ENCODE measurements at regions of chr5 and their contacts with region 1.

Region 1: DNA sequence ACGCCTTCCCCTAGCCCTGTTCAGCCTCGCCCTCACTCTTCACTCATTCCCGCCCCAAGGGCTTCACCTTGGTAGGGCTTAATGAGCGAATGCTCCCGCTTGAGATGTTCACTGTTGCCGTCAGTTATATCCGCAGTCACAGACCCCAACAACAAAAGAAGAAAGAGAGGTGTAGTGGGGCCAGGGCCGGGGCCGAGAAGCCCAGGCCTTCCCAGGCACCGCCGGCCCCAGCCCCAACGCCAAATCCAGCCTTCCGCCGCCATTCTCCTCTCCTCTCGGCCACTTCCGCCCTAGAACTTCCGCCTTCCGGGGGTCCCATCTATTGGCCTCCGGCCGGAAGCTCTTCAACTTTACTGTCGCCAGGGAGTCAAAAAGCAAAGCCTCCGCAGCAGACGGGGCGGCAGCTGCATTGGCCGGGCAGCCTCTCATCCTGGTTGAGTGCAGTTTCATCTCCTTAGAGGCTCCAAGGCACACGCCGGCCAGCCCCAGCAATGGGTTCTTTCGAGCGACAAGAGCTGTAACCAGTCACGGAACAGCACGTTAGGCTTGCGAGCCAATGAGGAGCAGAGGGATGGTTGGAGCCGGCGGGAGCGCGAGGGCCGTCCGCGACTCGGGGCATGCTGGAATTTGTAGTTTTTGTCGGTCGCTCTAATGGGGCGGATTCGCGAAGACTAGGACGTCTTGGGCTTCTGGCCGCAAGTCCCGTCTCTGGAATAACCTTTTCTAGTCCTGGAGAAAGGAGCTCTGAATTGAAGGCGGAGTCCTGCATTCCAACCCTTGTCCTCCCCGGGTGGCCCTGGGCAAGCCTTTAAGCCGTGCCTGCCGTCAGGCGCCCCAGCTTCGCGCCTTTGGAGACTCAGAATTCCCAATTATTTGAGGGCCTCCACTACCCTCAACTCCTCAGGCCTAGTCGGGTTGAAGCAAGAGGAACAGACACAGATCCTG is at the start of gene LMAN2:
- DNase-seq: peak; percentile 95
- ATAC-seq: peak; percentile 99
- H3K4me3 Mint-ChIP-seq: peak within 1 kb of the TSS; percentile 89
- H3K27ac Mint-ChIP-seq: peak within 1 kb of the TSS; percentile 99
- H3K4me1 Mint-ChIP-seq: peaks cover 48% of the 10 kb centered on the region
- H3K27me3 Mint-ChIP-seq: no peaks in the 10 kb centered on the region
- total RNA-seq, gene LMAN2: 74.5 to 92.1 TPM

Region 2: DNA sequence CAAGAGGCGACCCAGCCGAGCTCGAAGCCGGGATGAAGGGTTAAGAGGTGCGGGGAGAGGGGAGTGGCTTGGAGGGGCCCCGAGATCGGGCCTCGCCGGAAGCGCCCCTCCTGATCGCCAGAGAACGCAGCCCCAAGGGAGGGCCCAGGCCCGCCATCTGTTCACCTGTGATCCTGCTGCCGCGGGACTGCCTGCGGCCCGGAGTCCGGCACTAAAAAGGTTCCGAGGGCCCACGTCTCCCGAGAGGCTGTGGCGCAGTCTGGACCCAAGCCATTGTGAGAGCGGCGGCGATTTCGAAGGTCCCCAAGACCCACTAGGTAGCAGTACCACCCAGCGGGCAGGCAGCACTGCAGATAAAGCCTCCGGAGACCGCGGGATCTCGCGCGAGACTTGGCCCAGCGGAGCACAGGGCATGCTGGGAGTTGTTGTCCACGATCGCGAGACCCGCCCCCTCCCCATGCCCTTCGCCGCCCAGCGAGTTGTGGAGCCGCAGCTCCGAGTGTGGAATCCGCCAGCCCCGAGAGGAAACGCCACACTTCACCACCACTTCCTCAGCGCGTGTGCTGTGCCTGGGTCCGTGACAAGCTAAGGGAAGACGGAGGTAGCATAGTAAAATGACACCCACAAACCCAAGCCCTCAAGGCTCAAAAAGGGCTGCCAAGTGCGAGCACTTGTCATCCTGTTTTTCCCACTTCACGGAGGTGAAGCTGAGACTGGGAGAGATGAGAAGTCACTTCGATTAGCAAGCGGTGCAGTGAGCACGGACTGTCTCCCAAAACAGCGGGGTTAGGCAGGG is 990.0 kb before region 1 on chr5 and contains the start of gene KIAA1191:
- CTCF ChIA-PET with region 1: no interaction called
- POLR2A ChIA-PET with region 1: no interaction called
- intact Hi-C with region 1: loop called in 1 of 2 experiments (anchors 10 kb)
- DNase-seq: peak; percentile 97
- ATAC-seq: peak; percentile 91
- H3K4me3 Mint-ChIP-seq: peak within 1 kb of the TSS; percentile 95
- H3K27ac Mint-ChIP-seq: peak within 1 kb of the TSS; percentile 94
- H3K4me1 Mint-ChIP-seq: peaks cover 32% of the 10 kb centered on the region
- H3K27me3 Mint-ChIP-seq: no peaks in the 10 kb centered on the region
- total RNA-seq, gene KIAA1191: 42.2 to 52.6 TPM

Region 3: GRCh38 chr5:177303121-177303924 is 48.3 kb before region 1 on chr5 and contains the starts of genes PRELID1 and RAB24:
- CTCF ChIA-PET with region 1: interaction called, 16 read pairs
- POLR2A ChIA-PET with region 1: no interaction called
- intact Hi-C with region 1: loop called in 1 of 2 experiments (anchors 1 kb)
- DNase-seq: peak; percentile 95
- ATAC-seq: peak; percentile 69
- H3K4me3 Mint-ChIP-seq: peak within 1 kb of the TSS; percentile 93
- H3K27ac Mint-ChIP-seq: peak within 1 kb of the TSS; percentile 90
- H3K4me1 Mint-ChIP-seq: peaks cover 59% of the 10 kb centered on the region
- H3K27me3 Mint-ChIP-seq: no peaks in the 10 kb centered on the region
- total RNA-seq, gene PRELID1: 266 to 362 TPM
- total RNA-seq, gene RAB24: 10.9 to 21.0 TPM

Region 4: DNA sequence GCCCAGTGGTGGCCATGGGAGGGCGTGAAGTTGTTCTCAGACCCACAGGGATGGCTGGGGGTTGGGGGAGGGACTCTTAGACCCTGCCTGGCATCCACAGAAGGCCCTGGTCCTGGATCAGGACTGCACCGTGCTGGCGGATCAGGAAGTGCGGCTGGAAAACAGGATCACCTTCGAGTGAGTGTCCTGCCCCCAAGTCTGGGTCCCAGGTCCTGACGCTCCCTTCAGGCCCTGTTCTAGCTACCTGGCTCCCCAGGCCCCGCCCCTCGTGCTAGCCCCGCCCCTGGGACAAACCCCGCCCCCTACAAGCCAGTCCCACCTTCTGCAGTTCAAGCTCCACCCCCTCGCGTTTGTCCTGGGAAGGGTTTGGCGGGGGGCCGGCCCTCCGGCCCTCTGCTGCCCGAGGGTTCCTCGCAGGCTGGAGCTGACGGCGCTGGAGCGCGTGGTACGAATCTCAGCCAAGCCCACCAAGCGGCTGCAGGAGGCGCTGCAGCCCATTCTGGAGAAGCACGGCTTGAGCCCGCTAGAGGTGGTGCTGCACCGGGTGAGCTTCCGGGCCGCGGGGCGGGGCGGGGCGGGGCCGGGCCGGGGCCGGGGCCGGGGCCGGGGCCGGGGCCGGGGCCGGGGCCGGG is 18.9 kb after region 1 on chr5:
- CTCF ChIA-PET with region 1: interaction called, 21 read pairs
- POLR2A ChIA-PET with region 1: no interaction called
- intact Hi-C with region 1: no loop called
- DNase-seq: peak; percentile 76
- ATAC-seq: peak; percentile 66
- H3K4me3 Mint-ChIP-seq: peak overlapping the region; percentile 53
- H3K27ac Mint-ChIP-seq: no peak overlapping the region
- H3K4me1 Mint-ChIP-seq: peaks cover 70% of the 10 kb centered on the region
- H3K27me3 Mint-ChIP-seq: no peaks in the 10 kb centered on the region

Region 5: DNA sequence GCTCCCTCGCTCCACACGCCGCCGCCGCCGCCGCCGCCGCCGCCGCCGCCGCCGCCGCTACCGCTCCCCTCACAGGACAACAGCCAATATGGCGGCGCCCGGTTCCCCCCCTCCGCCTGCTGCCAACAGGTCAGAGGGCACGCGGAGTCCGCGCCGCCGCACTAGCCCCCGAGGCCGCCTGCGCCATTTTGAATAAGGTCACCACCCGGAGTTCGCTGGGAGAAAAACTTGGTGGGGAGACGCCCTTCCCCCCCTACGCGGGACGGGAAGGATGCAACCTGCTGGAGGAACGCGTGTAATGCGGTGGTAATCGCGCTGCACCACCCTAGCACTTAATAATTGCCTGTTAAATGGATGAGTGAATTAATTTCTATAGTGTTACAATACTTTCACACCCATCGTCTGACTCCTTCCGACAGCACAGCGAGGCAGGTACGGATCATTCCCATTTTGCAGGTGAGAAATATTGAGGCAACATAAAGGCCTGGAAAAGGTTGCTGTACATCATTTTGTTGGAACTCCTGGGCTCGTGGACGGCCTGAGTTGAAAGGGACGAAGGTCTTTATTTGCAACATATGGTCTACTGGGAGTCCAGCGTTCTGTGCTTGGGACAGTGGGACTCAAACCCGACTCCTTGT is 202.9 kb after region 1 on chr5 and contains the start of gene FAM193B:
- CTCF ChIA-PET with region 1: no interaction called
- POLR2A ChIA-PET with region 1: no interaction called
- intact Hi-C with region 1: loop called in 1 of 2 experiments (anchors 2 kb)
- DNase-seq: peak; percentile 98
- ATAC-seq: peak; percentile 99
- H3K4me3 Mint-ChIP-seq: peak within 1 kb of the TSS; percentile 80
- H3K27ac Mint-ChIP-seq: peak within 1 kb of the TSS; percentile 66
- H3K4me1 Mint-ChIP-seq: peaks cover 25% of the 10 kb centered on the region
- H3K27me3 Mint-ChIP-seq: no peaks in the 10 kb centered on the region
- total RNA-seq, gene FAM193B: 63.6 to 77.7 TPM

Region 6: DNA sequence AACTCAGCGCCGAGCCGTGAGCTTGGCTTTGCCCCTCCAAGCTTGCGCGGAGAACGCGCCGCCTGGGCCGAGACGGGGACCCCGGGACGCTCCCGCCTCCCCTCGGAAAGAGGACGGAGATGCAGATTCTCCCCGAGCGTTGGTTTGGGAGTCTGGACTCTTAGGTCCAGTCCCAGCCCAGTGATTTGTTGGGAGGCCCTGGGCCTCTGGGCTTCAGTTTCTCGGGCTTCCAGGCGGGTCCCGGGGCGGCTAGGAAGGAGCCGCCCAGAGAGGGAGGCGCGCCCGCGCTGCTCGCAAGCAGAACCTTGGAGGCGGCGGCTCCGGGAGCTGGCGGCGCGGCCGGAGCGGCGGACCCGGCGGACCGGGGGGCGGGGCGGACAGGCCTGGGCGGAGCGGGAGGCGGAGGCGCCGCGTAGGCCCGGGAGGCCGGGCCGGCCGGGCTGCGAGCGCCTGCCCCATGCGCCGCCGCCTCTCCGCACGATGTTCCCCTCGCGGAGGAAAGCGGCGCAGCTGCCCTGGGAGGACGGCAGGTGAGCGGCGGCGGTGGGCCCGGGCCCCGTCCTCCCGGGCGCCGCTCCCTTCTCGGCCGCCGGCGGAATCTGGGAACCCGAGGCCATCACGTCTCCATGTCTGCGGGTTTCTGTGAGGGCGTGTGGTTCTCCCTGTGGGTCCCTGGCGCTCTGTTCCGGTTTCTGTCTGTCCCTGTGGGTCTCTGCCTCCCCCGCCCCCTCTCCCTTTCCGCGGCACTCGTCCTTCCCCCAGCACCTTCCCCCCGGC is 248.3 kb after region 1 on chr5 and contains the start of gene B4GALT7:
- CTCF ChIA-PET with region 1: no interaction called
- POLR2A ChIA-PET with region 1: no interaction called
- intact Hi-C with region 1: loop called in 1 of 2 experiments (anchors 2 kb)
- DNase-seq: peak; percentile 92
- ATAC-seq: peak; percentile 91
- H3K4me3 Mint-ChIP-seq: peak within 1 kb of the TSS; percentile 93
- H3K27ac Mint-ChIP-seq: peak within 1 kb of the TSS; percentile 89
- H3K4me1 Mint-ChIP-seq: peaks cover 28% of the 10 kb centered on the region
- H3K27me3 Mint-ChIP-seq: no peaks in the 10 kb centered on the region
- total RNA-seq, gene B4GALT7: 16.3 to 18.1 TPM